Activated CD4-positive, alpha-beta T cell treated with anti-CD3 and anti-CD28 coated beads, Interleukin-2, amount 10 ng/mL, durations not matched to agents 24 days and 14 days (primary cell): ENCODE measurements at regions of chr4 and their contacts with region 1.

Region 1: GRCh38 chr4:102564399-102565059 is 63.4 kb downstream of the NFKB1 start:
- DNase-seq: no peak
- H3K4me3 Mint-ChIP-seq: peak overlapping the region; percentile 12
- H3K27ac Mint-ChIP-seq: peak overlapping the region; percentile 65
- H3K4me1 Mint-ChIP-seq: peaks cover 66% of the 10 kb centered on the region
- H3K27me3 Mint-ChIP-seq: no peaks in the 10 kb centered on the region

Region 2: GRCh38 chr4:102546635-102547034 is 17.9 kb before region 1 on chr4:
- intact Hi-C with region 1: loop called (anchors 1 kb)
- DNase-seq: no peak
- H3K4me3 Mint-ChIP-seq: peak overlapping the region; percentile 28
- H3K27ac Mint-ChIP-seq: peak overlapping the region; percentile 45
- H3K4me1 Mint-ChIP-seq: peaks cover 46% of the 10 kb centered on the region
- H3K27me3 Mint-ChIP-seq: no peaks in the 10 kb centered on the region

Region 3: DNA sequence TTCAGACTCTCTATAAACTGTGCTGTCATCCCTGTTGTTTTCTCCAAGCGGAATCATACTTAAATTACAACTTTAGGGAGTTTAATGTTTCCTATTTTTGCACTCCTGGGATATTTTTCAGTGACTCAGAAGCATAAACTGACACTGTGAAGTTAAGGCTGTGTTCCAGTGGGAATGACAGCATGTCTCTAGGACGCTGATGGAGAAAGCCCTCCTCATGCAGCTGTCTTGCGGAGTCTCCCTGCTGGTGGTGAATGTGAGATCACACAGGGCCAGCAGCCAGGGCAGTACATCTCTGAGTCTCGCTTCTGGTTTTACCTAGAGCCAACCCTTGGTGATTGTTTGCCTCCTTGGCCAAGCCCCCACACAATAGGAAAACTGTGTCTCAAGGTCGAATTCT is 10.0 kb before region 1 on chr4:
- intact Hi-C with region 1: loop called (anchors 1 kb)
- DNase-seq: no peak
- H3K4me3 Mint-ChIP-seq: no peak overlapping the region
- H3K27ac Mint-ChIP-seq: no peak overlapping the region
- H3K4me1 Mint-ChIP-seq: peaks cover 46% of the 10 kb centered on the region
- H3K27me3 Mint-ChIP-seq: no peaks in the 10 kb centered on the region

Region 4: GRCh38 chr4:102580463-102580842 is 15.9 kb after region 1 on chr4:
- intact Hi-C with region 1: loop called (anchors 2 kb)
- DNase-seq: no peak
- H3K4me3 Mint-ChIP-seq: peak overlapping the region; percentile 31
- H3K27ac Mint-ChIP-seq: peak overlapping the region; percentile 69
- H3K4me1 Mint-ChIP-seq: peaks cover 59% of the 10 kb centered on the region
- H3K27me3 Mint-ChIP-seq: no peaks in the 10 kb centered on the region